ENCODE measurements at regions of chr12 and their contacts with region 1.

Region 1: DNA sequence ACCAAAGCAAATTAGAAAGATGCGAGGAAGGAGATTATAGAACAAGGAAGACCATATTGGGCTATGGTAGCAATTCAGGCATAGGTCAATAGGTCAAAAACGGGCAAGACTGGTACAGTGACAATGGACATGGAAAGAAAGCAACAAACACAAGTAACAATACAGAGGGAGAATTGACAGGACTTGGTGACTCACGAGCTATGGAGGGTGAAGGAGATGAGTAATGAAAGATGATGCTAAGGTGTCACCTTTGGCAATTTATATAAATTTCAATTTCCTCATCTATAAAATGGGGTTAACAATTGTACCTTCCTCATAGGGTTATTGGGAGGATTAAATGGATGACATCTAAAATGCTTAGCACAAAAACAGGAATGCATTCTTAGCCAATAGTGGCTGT is 15.1 kb upstream of the DUSP16 start:
- DNase-seq: peak; percentile 67
- ATAC-seq: peak; percentile 60
- H3K4me3 ChIP-seq: no peak overlapping the region
- H3K27ac ChIP-seq: peak overlapping the region; percentile 98
- H3K4me1 ChIP-seq: peaks cover 26% of the 10 kb centered on the region
- H3K27me3 ChIP-seq: no peaks in the 10 kb centered on the region
- CTCF ChIP-seq: no peak

Region 2: DNA sequence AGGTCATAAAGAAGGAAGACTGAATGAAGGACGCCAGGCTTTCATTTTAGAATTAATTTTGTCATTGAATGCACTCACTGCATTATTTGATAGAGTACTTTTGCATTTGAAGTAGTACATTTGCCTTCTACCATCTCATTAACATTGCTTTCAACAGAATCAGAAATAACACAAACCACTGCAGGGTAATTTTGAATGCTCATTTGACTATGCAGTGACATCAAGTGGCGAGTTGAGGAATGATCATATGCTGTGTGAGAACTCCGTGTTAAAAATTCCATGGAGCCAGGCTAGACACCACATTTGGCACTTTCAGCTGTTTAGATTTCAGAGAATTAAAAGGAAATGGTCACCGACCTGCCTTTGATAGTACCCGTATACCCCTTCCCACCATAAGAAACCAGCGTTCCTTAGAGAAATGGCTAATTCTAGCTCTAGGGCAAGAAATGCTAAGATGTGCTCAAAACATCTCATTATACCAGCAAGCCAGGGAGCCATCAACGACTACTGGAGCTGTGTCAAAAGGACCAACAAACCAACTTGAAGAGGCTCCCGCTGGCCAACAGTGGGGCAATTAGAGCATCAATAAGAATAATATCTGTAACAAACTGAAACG is 405.7 kb after region 1 on chr12:
- CTCF ChIA-PET with region 1: interaction called, 11 read pairs
- POLR2A ChIA-PET with region 1: no interaction called
- intact Hi-C with region 1: no loop called
- DNase-seq: peak; percentile 63
- ATAC-seq: peak; percentile 38; the same call in 1 of the 2 replicates
- H3K4me3 ChIP-seq: no peak overlapping the region
- H3K27ac ChIP-seq: no peak overlapping the region
- H3K4me1 ChIP-seq: peaks cover 15% of the 10 kb centered on the region
- H3K27me3 ChIP-seq: no peaks in the 10 kb centered on the region
- CTCF ChIP-seq: peak; percentile 77